Calu3 (cell line): ENCODE measurements at regions of chr7 and their contacts with region 1.

Region 1: DNA sequence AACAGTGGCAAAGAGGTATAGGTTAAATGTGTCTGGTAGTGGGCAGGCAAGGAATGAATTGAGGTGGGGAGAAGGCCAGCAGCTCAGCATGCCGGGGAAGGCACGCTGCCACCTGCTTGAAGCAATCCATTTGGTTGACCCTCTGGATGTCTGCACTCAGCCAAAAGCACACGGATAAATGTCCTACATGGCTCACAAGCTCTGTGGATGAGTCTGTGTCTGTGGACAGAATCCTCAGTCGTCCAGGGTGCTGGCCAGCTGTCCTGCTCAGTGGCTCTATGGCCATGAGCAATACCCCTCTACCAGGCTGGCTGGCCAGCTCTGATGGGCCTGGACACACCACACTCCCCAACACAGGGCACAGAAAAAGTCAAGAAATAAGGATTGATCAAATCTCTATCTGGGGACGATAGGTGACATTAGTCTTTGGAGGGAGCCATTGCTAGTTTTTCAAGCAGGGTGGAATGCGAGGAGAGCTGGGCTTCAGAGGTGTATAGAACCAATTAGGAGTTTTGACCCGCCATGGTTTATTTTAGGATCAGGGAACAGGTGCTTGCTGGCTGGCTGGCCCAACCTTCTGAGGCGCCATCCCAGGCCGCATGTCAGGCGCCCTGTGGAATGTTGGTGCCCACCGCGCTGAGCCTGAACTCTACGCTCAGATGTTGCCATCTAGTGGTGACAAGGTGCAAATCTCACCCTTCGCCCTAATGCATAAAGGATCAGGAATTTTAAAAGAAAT is 493.4 kb downstream of the TNS3 start:
- DNase-seq: peak; percentile 77
- H3K4me3 Mint-ChIP-seq: no peak overlapping the region
- H3K27ac Mint-ChIP-seq: no peak overlapping the region
- H3K4me1 Mint-ChIP-seq: no peaks in the 10 kb centered on the region
- H3K27me3 Mint-ChIP-seq: no peaks in the 10 kb centered on the region
- CTCF ChIP-seq: peak; percentile 98

Region 2: GRCh38 chr7:45917658-45918057 is 1170.8 kb before region 1 on chr7:
- CTCF ChIA-PET with region 1: interaction called, 10 read pairs
- intact Hi-C with region 1: no loop called
- DNase-seq: peak; percentile 97
- H3K4me3 Mint-ChIP-seq: peak overlapping the region; percentile 99
- H3K27ac Mint-ChIP-seq: peak overlapping the region; percentile 8
- H3K4me1 Mint-ChIP-seq: peaks cover 26% of the 10 kb centered on the region
- H3K27me3 Mint-ChIP-seq: no peaks in the 10 kb centered on the region
- CTCF ChIP-seq: peak; percentile 97

Region 3: DNA sequence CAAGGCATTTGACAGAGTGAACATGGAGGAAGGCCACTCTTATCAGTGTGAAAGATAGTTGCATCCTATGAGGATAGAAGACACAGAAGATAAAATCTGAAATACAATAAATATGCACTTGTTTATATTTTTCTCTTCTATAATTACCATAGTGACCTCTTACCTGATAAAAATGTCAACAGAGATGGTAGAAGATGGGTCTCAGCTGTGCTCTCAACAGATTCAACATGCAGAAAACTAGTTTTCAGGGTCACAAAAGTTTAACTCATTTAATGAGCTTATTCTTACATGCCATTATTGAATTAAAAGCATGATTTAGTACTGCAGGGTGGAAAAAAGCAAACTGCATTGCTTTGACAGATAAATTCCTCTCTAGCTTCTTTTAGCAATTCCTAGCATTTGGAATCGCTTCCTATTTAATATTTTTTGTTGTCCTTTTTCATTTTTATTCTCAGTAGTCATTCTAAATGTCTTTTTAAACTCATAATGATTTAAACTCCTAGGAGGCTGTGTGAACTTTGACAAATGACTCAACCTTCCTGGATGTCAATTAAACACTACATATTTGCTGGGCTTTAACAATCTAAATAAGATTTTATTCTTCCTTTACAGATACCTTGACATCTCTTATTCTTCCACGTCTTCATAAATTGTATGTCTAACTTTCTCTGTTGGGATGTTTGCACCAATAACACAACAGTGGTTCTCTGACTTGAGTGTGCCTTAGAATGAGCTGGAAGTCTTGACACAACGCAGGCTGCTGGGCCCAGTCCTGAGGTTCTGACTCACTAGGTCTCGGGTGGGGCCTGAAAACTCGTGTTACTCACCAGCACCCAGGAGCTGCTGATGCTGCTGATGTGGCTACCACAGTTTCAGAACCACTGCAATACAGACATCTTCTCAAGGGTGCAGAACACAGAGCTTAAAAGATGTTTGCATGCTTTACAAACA is 602.0 kb before region 1 on chr7:
- CTCF ChIA-PET with region 1: interaction called, 3 read pairs
- intact Hi-C with region 1: loop called (anchors 5 kb)
- DNase-seq: peak; percentile 60
- H3K4me3 Mint-ChIP-seq: peak overlapping the region; percentile 19
- H3K27ac Mint-ChIP-seq: peak overlapping the region; percentile 83
- H3K4me1 Mint-ChIP-seq: peaks cover 50% of the 10 kb centered on the region
- H3K27me3 Mint-ChIP-seq: no peaks in the 10 kb centered on the region
- CTCF ChIP-seq: no peak

Region 4: GRCh38 chr7:46695051-46695707 is 393.3 kb before region 1 on chr7:
- CTCF ChIA-PET with region 1: interaction called, 6 read pairs
- intact Hi-C with region 1: loop called (anchors 5 kb)
- DNase-seq: peak; percentile 86
- H3K4me3 Mint-ChIP-seq: no peak overlapping the region
- H3K27ac Mint-ChIP-seq: peak overlapping the region; percentile 91
- H3K4me1 Mint-ChIP-seq: peaks cover 47% of the 10 kb centered on the region
- H3K27me3 Mint-ChIP-seq: no peaks in the 10 kb centered on the region
- CTCF ChIP-seq: peak; percentile 16

Region 5: DNA sequence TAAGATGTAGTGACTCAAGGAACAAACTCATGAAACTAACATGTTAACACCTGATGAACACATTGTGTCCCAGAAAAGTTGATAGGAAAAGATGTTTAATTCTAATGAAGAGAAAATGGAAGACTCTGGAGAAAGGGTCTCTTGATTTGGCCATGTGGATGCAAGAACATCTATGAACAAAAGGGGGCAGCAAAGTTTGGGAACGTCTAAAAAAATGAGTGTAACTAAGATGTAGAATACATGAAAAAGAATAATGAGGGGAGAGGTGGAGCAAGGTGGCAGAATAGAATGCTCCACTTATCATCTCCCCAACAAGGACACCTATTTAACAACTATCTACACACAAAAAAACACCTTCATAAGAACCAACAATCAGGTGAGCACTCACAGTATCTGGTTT is 311.7 kb before region 1 on chr7:
- CTCF ChIA-PET with region 1: no interaction called
- intact Hi-C with region 1: loop called (anchors 2 kb)
- DNase-seq: peak; percentile 28
- H3K4me3 Mint-ChIP-seq: no peak overlapping the region
- H3K27ac Mint-ChIP-seq: no peak overlapping the region
- H3K4me1 Mint-ChIP-seq: peaks cover 18% of the 10 kb centered on the region
- H3K27me3 Mint-ChIP-seq: no peaks in the 10 kb centered on the region
- CTCF ChIP-seq: peak; percentile 51

Region 6: GRCh38 chr7:46859963-46860475 is 228.5 kb before region 1 on chr7:
- CTCF ChIA-PET with region 1: no interaction called
- intact Hi-C with region 1: loop called (anchors 5 kb)
- DNase-seq: no peak
- H3K4me3 Mint-ChIP-seq: no peak overlapping the region
- H3K27ac Mint-ChIP-seq: no peak overlapping the region
- H3K4me1 Mint-ChIP-seq: no peaks in the 10 kb centered on the region
- H3K27me3 Mint-ChIP-seq: no peaks in the 10 kb centered on the region
- CTCF ChIP-seq: no peak

Region 7: GRCh38 chr7:46972205-46972604 is 116.3 kb before region 1 on chr7:
- CTCF ChIA-PET with region 1: no interaction called
- intact Hi-C with region 1: loop called (anchors 5 kb)
- DNase-seq: peak; percentile 25
- H3K4me3 Mint-ChIP-seq: no peak overlapping the region
- H3K27ac Mint-ChIP-seq: peak overlapping the region; percentile 100
- H3K4me1 Mint-ChIP-seq: peaks cover 54% of the 10 kb centered on the region
- H3K27me3 Mint-ChIP-seq: no peaks in the 10 kb centered on the region
- CTCF ChIP-seq: no peak